Gastrocnemius medialis (tissue), 4 donors: ENCODE measurements at regions of chr20 and their contacts with region 1.

Region 1: DNA sequence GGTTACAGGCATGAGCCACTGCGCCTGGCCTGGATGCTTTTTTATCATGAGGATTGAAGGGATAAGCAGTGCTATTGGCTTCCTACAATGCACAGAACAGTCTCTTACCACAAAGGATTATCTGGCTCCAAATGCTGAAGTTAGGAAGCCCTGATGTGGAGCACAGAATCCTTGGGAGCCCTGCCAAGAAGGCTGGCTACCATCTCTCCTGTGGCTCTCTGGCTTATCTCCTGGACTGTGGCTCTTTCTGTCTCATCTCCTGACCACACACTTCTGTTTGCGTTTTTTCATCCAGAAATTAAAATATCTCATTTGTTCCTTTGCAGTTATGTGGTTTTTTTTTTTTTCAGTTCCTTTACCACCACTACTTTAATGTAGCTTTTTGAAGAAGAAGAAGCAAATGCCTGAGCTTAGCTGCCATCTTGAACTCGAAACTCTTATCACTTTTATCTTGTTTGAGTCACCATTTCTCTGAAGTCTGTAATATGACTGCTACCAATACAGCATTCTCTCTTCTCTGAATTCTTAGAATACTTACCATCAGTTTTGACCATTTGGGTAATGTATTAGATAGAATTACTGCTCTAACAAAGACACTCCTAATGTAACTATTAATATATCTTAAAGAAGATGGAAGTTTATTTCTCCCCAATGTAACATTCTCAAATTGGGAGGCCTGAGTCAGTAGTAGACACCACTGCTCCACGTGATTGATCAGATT is 1044.7 kb downstream of the KIF16B start:
- DNase-seq: no peak
- ATAC-seq: no peak
- H3K4me3 ChIP-seq: no peak overlapping the region
- H3K27ac ChIP-seq: no peak overlapping the region
- H3K4me1 ChIP-seq: no peaks in the 10 kb centered on the region
- H3K27me3 ChIP-seq: no peaks in the 10 kb centered on the region
- CTCF ChIP-seq: no peak
- POLR2A ChIP-seq: no peak

Region 2: GRCh38 chr20:15446373-15446772 is 82.2 kb before region 1 on chr20:
- in situ Hi-C with region 1: loop called in 1 of 4 experiments (anchors 25 kb)
- intact Hi-C with region 1: no loop called
- DNase-seq: no peak
- ATAC-seq: no peak
- H3K4me3 ChIP-seq: no peak overlapping the region
- H3K27ac ChIP-seq: no peak overlapping the region
- H3K4me1 ChIP-seq: no peaks in the 10 kb centered on the region
- H3K27me3 ChIP-seq: no peaks in the 10 kb centered on the region
- CTCF ChIP-seq: no peak
- POLR2A ChIP-seq: no peak

Region 3: GRCh38 chr20:15742087-15742486 is 213.5 kb after region 1 on chr20:
- in situ Hi-C with region 1: no loop called
- intact Hi-C with region 1: no loop called
- DNase-seq: no peak
- ATAC-seq: no peak
- H3K4me3 ChIP-seq: no peak overlapping the region
- H3K27ac ChIP-seq: no peak overlapping the region
- H3K4me1 ChIP-seq: no peaks in the 10 kb centered on the region
- H3K27me3 ChIP-seq: no peaks in the 10 kb centered on the region
- CTCF ChIP-seq: no peak
- POLR2A ChIP-seq: no peak